ENCODE measurements at regions of chr3 and their contacts with region 1.

Region 1: GRCh38 chr3:108552267-108553159 is 36.7 kb downstream of the CIP2A start:
- DNase-seq: no peak
- H3K4me3 Mint-ChIP-seq: no peak overlapping the region
- H3K27ac Mint-ChIP-seq: no peak overlapping the region
- H3K4me1 Mint-ChIP-seq: peaks cover 10% of the 10 kb centered on the region
- H3K27me3 Mint-ChIP-seq: no peaks in the 10 kb centered on the region

Region 2: DNA sequence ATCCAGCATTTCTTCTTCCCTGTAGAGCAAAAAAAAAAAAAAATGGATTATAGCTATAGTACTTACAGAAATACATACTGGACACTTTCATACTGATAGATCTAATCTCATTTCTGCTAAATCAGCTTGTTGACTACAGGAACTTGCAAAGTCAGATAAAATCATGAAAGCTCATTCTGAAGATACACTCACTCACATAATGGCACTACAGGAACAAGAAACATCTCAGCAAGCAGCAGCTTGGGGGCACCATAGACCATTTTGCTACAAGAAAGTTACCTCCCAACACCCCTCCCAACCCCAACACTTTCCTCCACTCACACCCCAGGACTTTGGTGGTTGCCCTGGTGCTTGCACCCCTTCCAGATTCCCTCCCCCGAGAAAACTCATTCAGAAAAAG is 46.7 kb before region 1 on chr3:
- intact Hi-C with region 1: loop called (anchors 5 kb)
- DNase-seq: no peak
- H3K4me3 Mint-ChIP-seq: no peak overlapping the region
- H3K27ac Mint-ChIP-seq: no peak overlapping the region
- H3K4me1 Mint-ChIP-seq: peaks cover 9% of the 10 kb centered on the region
- H3K27me3 Mint-ChIP-seq: peaks cover 6% of the 10 kb centered on the region

Measured in activated T-helper 2 cell treated with anti-CD3 and anti-CD28 coated beads, Interferon-gamma antibody, Interleukin-2, Interleukin-4, amounts not matched to agents 10 μg/mL and 5 μg/mL and 100 μg/mL, durations not matched to agents 14 hours and 24 hours and 36 hours (primary cell).